ENCODE measurements at regions of chr16 and their contacts with region 1.

Region 1: GRCh38 chr16:50210266-50211038 is 55.9 kb upstream of the ADCY7 start:
- DNase-seq: peak; percentile 93

Region 2: GRCh38 chr16:50024684-50025536 is 185.5 kb before region 1 on chr16 and contains the start of gene CNEP1R1:
- intact Hi-C with region 1: loop called (anchors 10 kb)
- DNase-seq: peak; percentile 98
- total RNA-seq, gene CNEP1R1: 18.6 to 22.2 TPM

Region 3: DNA sequence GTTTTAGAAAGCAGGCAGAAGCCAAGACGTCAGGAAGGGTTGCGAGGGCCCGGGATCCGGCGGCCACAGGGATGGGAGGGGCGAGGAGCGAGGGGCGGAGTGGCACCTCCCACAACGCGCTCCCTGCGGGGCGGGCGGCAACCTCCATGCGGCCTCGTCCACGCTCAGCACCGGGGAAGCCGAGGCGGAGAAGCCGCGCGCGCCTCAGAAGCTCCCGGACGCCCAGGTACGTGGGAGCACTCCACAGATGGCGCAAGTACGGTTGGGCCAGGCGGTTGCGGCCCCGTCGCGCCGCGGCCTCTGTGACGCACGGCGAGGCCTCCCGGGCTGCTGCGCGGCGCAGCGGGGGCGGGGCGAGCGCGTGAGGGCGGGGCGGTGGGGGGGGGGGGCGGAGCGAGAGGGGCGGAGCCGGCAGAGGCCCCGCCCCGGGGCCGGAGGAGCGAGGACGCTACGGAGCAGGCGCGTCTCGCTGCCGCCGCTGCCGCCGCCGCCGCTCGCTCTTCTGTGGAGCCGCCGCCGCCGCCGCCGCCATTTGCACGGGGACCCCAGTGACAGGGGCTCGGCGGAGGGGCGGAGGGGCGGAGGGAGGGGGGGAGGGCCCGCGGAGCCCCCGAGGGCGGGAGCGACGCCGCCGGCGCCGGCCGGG is 57.5 kb before region 1 on chr16 and contains the start of gene TENT4B:
- intact Hi-C with region 1: loop called in 1 of 2 experiments (anchors 5 kb)
- DNase-seq: peak; percentile 96
- total RNA-seq, gene TENT4B: 13.4 to 15.0 TPM

Region 4: DNA sequence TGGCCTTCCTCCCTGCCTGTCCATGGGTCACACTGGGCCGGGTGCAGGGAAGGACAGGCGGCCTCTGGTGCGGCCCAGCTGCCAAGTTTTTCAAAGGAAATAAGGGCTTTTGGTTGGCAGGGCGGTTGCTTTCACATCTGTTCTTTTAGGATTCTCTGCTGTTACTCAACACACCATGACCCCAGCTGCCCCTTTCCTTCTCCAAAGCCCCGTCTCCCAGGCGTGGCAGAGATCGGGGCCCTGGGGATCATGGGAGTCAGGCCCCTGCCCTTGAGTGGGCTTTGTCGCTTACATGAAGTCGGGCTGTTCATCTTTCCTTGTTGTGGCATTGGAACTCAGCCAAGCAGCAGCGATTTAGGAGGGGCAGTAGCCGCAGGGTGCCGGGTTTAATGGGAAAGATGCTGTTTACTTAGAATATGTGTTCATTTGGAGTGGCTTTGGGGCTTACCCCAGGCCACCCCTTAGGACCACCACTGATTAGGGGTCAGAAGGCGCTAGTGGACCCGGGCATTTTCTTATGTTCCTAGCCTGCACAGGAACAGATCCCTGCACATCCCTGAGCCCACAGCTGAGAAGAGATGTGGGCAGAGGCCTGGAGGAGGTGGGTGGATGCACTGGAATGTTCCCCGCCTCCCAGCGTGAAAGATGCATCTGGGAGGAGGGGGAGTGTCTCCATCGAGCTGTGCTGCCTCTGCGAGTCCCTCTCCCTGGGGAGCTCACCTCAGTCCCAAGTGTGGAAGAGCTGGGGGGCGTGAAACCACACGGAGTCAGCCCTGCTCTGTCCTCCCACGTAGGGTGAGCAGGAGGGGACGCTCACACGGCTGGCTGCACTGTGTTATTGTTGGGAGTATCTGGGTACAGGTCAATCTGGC is 49.1 kb after region 1 on chr16:
- intact Hi-C with region 1: no loop called
- DNase-seq: no peak

Region 5: DNA sequence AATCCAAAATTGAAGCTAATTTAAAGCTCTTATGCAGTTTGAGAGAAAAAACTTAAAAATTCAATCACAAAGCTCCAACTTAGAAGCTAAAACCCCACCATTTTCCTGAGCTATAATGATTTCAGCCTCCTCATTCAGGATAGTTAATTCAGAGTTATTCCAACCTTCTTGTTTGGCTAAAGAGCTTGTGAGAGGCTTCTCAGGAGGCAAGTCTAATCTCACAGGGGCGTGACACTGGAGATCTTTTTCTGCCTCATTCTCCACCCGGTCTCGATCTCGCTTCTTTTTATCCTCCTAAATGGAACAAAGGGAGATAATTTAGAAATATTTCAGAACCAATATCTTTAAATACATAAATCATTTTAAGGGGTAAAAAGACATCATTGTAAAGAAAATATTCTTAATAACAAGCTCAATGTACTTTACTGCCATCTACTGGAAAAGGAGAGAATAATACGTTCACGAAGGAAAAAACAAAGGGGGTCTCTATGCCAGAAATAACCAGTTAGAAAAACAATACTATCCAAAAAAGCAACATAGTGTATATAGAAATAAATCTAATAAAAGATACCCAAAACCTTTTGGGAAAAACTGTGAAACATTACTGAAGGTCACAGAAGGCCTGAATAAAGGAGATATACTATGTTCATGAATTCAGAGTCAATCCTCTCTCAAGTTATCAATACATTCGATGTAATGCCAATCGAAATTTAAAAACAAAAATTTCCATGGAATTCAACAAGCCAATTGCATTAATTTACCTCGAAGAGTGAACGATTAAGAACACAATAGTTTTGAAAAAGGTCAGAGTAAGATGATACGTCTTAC is 144.4 kb after region 1 on chr16:
- intact Hi-C with region 1: loop called in 1 of 2 experiments (anchors 10 kb)
- DNase-seq: no peak